Heart left ventricle (tissue), 16 donors: ENCODE measurements at regions of chr17 and their contacts with region 1.

Region 1: DNA sequence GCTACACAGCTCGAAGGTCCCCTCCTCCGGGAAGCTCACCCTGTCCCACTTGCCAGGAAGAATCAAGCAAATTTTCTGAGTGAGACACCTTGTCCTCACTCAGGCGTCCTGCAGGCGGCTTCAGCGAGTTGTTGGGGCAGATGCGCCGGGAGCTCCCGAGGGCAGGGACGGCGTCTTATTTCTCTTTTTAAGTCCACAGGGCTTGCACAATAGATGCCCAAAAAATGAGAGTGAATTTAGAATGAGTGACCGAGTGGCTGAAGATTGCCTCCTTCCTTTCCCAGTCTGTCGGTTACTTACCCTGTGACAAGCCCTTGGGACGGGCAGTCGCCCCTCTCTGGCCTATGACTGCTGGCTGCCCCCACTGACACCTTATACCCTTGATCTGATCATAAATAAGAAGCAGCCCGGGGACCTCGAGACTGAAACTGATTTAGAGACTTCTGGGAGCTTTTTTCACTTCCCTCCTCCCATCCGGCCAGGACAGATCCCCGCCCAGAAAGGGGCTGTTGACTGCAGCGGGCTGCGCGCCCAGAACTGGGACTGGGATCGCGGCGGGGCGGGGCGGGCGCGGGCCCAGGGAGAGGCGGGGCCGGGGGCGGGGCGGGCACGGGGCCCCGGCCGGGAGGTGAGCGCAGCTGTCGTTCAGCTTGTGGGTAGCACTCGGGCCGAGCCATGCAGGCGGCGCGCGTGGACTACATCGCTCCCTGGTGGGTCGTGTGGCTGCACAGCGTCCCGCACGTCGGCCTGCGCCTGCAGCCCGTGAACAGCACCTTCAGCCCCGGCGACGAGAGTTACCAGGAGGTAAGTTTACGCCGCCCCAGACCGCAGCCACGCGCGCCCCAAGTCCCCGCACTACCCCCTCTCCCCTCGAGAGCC is at the start of gene TTYH2:
- DNase-seq: peak; percentile 92 to 94 (median 94)
- ATAC-seq: peak; percentile 72 to 87 (median 83)
- H3K4me3 ChIP-seq: peak within 1 kb of the TSS; percentile 43 to 75 (median 64)
- H3K27ac ChIP-seq: peak within 1 kb of the TSS; percentile 49 to 93 (median 85)
- H3K4me1 ChIP-seq: peaks cover 0 to 82% (median 49%) of the 10 kb centered on the region in 12 donors
- H3K27me3 ChIP-seq: no peaks in the 10 kb centered on the region
- CTCF ChIP-seq: peak in 5 of 12 donors; percentile 14 to 39 (median 20)
- POLR2A ChIP-seq: peak in 1 of 2 donors; percentile 60
- total RNA-seq, gene TTYH2: 17.3 to 34.6 (median 24.6) TPM

Region 2: DNA sequence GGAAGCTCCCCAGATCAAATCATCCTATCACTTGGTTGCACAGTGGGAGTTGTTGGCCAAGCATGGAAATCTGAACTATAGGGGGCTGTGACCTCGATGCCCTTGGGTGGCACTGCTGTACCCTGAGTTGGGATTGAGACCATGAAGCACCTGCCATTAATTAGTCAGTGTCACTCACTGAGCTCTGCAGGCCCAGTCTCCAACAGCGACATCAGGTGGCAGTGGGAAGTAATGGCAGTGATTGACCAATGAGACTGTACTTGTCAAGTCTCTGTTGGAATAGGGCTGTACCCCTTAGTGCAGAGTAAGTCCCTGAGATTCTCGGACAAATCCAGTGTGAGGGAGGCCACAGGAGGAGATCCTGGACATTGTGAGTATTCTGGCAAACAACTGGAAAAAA is 127.7 kb before region 1 on chr17:
- intact Hi-C with region 1: no loop called
- DNase-seq: no peak
- ATAC-seq: no peak
- H3K4me3 ChIP-seq: no peak overlapping the region
- H3K27ac ChIP-seq: no peak overlapping the region
- H3K4me1 ChIP-seq: no peaks in the 10 kb centered on the region
- H3K27me3 ChIP-seq: peaks cover 3 to 54% (median 14%) of the 10 kb centered on the region in 9 donors
- CTCF ChIP-seq: no peak
- POLR2A ChIP-seq: no peak

Region 3: GRCh38 chr17:74240618-74241205 is 27.6 kb after region 1 on chr17:
- intact Hi-C with region 1: loop called in 3 of 10 experiments (anchors 2 kb)
- DNase-seq: peak in 4 of 5 donors; percentile 55 to 72 (median 64)
- ATAC-seq: peak in 2 of 4 donors; percentile 6 to 35
- H3K4me3 ChIP-seq: no peak overlapping the region
- H3K27ac ChIP-seq: peak overlapping the region in 5 of 12 donors; percentile 46 to 79 (median 61)
- H3K4me1 ChIP-seq: peaks cover 0 to 73% (median 43%) of the 10 kb centered on the region in 12 donors
- H3K27me3 ChIP-seq: no peaks in the 10 kb centered on the region
- CTCF ChIP-seq: no peak
- POLR2A ChIP-seq: no peak

Region 4: GRCh38 chr17:74354123-74354522 is 141.0 kb after region 1 on chr17:
- intact Hi-C with region 1: loop called in 1 of 10 experiments (anchors 5 kb)
- DNase-seq: peak in 4 of 5 donors; percentile 46 to 74 (median 53)
- ATAC-seq: peak in 3 of 4 donors; percentile 42 to 69 (median 64)
- H3K4me3 ChIP-seq: no peak overlapping the region
- H3K27ac ChIP-seq: no peak overlapping the region
- H3K4me1 ChIP-seq: peaks cover 0 to 21% (median 7%) of the 10 kb centered on the region in 12 donors
- H3K27me3 ChIP-seq: peaks cover 24 to 93% (median 74%) of the 10 kb centered on the region in 9 donors
- CTCF ChIP-seq: peak; percentile 30 to 68 (median 45)
- POLR2A ChIP-seq: no peak

Region 5: DNA sequence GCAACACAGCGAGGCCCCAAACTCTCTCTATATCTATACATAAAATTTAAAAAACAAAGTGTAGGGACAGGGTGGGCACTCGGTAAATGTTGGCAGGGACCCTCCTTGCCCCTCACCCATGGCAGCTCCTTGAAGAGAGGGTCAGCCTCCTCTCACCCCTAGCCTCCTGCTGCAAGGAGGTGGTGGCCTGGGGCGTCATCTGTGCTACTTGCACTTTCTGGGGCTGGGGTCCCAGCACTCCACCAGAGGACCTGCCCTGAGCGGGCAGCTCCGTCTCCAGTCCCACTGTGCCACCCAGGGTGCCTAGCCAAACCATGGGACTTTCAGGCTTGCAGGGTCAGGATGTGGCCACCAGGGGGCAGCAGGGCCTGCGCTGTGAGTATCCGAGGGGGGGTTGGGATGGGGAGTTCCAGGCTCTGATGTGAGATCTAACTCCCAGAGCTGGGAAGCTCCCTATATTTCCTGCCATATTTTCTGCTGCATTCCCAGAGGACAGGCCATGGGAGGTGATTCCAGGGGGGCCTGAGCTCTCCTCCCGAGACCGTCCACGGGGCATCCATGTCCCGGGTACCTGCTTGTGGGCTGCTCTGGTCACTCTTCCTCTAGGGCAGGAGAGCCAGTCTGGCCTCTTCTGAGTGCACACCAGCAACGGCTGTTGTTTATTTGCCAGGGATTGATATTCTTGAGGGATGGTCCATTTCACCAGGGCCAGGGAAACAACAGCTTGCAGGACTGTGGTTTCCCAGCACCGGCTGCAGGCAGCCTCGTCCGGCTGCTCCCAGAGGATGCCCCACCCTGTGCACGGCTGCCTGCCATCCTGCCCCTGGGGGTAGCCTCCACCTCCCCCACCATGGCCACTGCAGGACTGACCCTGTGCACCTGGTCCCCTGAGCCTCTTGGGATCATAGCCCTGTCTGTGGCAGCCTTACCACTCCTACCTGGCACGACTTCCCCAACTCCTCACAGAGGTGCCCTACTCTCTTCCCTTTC is 155.2 kb after region 1 on chr17:
- intact Hi-C with region 1: loop called in 6 of 10 experiments (anchors 5 to 10 kb)
- DNase-seq: peak; percentile 70 to 85 (median 76)
- ATAC-seq: peak; percentile 64 to 86 (median 78)
- H3K4me3 ChIP-seq: peak overlapping the region in 6 of 12 donors; percentile 5 to 19 (median 14)
- H3K27ac ChIP-seq: no peak overlapping the region
- H3K4me1 ChIP-seq: peaks cover 0 to 18% (median 8%) of the 10 kb centered on the region in 12 donors
- H3K27me3 ChIP-seq: peaks cover 0 to 6% (median 0%) of the 10 kb centered on the region in 9 donors
- CTCF ChIP-seq: peak; percentile 85 to 97 (median 90)
- POLR2A ChIP-seq: no peak

Region 6: GRCh38 chr17:74457146-74457819 is 244.1 kb after region 1 on chr17:
- intact Hi-C with region 1: loop called in 6 of 10 experiments (anchors 5 to 10 kb)
- DNase-seq: peak; percentile 73 to 90 (median 79)
- ATAC-seq: peak in 3 of 4 donors; percentile 22 to 27 (median 25)
- H3K4me3 ChIP-seq: peak overlapping the region in 2 of 12 donors; percentile 6 to 17
- H3K27ac ChIP-seq: peak overlapping the region in 4 of 12 donors; percentile 11 to 55 (median 32)
- H3K4me1 ChIP-seq: peaks cover 8 to 48% (median 36%) of the 10 kb centered on the region in 12 donors
- H3K27me3 ChIP-seq: peaks cover 0 to 5% (median 0%) of the 10 kb centered on the region in 9 donors
- CTCF ChIP-seq: peak; percentile 91 to 98 (median 95)
- POLR2A ChIP-seq: no peak